Gastrocnemius medialis (tissue), 4 donors: ENCODE measurements at regions of chr1 and their contacts with region 1.

Region 1: DNA sequence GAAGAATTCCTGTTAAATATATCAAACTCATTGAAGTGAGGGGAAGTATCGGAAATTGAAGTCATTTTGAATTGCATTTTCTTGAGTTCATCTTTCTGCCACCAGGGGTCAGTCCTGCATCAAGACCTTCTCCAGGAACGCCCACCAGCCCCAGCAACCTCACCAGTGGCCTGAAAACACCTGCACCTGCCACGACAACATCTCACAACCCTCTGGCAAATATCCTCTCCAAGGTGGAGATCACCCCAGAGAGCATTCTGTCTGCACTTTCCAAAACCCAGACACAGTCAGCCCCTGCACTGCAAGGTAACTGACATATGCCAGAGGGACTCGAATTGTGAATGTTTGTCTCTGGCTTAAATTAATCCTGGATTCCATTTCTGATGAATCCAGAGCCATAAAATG is 22.8 kb upstream of the TARS2 start:
- DNase-seq: peak; percentile 25 to 54
- ATAC-seq: peak; percentile 48 to 73
- H3K4me3 ChIP-seq: no peak overlapping the region
- H3K27ac ChIP-seq: peak overlapping the region in 1 of 4 donors; percentile 37
- H3K4me1 ChIP-seq: peaks cover 0 to 9% of the 10 kb centered on the region in 2 donors
- H3K27me3 ChIP-seq: no peaks in the 10 kb centered on the region
- CTCF ChIP-seq: peak; percentile 79 to 85 (median 81)
- POLR2A ChIP-seq: no peak

Region 2: GRCh38 chr1:150346316-150346715 is 118.1 kb before region 1 on chr1:
- in situ Hi-C with region 1: no loop called
- intact Hi-C with region 1: no loop called
- DNase-seq: no peak
- ATAC-seq: no peak
- H3K4me3 ChIP-seq: no peak overlapping the region
- H3K27ac ChIP-seq: no peak overlapping the region
- H3K4me1 ChIP-seq: no peaks in the 10 kb centered on the region
- H3K27me3 ChIP-seq: no peaks in the 10 kb centered on the region
- CTCF ChIP-seq: no peak
- POLR2A ChIP-seq: no peak

Region 3: GRCh38 chr1:150429805-150430204 is 34.6 kb before region 1 on chr1:
- in situ Hi-C with region 1: no loop called
- intact Hi-C with region 1: no loop called
- DNase-seq: no peak
- ATAC-seq: no peak
- H3K4me3 ChIP-seq: no peak overlapping the region
- H3K27ac ChIP-seq: no peak overlapping the region
- H3K4me1 ChIP-seq: no peaks in the 10 kb centered on the region
- H3K27me3 ChIP-seq: no peaks in the 10 kb centered on the region
- CTCF ChIP-seq: no peak
- POLR2A ChIP-seq: no peak

Region 4: DNA sequence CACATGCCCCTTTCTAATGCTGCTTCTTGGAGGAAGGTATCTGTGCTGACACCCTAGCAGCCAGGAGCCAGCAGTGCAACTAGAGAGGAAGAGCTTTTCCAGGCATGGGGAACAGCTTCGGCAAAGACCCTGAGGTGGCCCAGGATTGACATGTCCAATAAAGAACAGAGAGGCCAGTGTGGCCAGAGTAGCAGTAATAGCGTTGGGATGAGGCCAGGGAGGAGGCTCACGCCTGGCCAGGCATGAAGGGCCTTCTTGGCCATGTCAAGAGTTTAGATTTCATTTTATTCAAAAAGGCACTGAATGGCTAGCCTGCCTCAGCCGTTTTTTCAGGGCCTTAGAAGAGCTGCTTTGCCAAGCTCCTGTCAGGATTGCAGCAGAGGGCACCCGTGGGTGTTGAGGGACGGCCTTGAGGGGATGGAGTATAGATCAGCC is 68.5 kb after region 1 on chr1:
- in situ Hi-C with region 1: loop called (anchors 5 to 10 kb)
- intact Hi-C with region 1: loop called (anchors 1 kb)
- DNase-seq: no peak
- ATAC-seq: no peak
- H3K4me3 ChIP-seq: no peak overlapping the region
- H3K27ac ChIP-seq: peak overlapping the region; percentile 62 to 81 (median 75)
- H3K4me1 ChIP-seq: peaks cover 18 to 25% of the 10 kb centered on the region in 2 donors
- H3K27me3 ChIP-seq: no peaks in the 10 kb centered on the region
- CTCF ChIP-seq: peak in 1 of 5 experiments; percentile 10
- POLR2A ChIP-seq: no peak

Region 5: GRCh38 chr1:150537732-150538684 is 73.6 kb after region 1 on chr1:
- in situ Hi-C with region 1: loop called (anchors 5 to 10 kb)
- intact Hi-C with region 1: no loop called
- DNase-seq: no peak
- ATAC-seq: no peak
- H3K4me3 ChIP-seq: no peak overlapping the region
- H3K27ac ChIP-seq: no peak overlapping the region
- H3K4me1 ChIP-seq: peaks cover 9 to 15% of the 10 kb centered on the region in 2 donors
- H3K27me3 ChIP-seq: no peaks in the 10 kb centered on the region
- CTCF ChIP-seq: no peak
- POLR2A ChIP-seq: no peak

Region 6: DNA sequence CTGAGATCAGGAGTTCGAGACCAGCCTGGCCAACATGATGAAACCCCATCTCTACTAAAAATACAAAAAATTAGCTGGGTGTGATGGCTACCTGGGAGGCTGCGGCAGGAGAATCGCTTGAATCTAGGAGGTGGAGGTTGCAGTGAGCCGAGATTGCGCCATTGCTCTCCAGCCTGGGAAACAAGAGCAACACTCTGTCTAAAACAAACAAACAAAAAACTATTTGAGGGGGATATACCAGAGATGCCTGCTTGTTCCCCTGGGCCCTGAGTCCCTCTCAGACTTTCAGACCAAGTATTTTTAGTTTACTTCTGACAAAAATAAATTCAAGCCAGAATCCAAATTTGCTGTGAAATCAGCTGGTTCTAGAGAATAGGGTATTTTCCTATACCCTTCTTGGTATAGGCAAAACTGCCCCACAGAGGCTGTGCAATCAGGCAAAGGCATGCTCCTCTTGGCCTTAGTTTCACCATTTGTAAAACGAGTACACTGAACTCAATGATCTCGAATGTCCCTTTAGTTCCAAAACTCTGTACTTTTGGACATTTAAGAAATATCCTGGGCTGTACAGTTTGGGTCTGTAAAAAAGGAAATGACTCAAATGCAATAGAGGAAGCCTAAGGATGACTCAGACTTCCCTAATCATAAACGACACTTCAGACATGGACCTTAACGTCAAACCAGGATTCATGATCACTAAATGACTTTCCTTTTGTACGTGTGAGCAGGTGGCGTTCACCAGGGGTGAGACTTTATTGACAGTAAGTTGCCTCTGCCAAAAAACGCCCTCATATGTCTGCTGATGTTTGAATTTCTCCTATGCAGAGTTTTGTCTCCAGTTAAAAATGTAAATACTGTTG is 148.9 kb after region 1 on chr1:
- in situ Hi-C with region 1: loop called in 1 of 4 experiments (anchors 10 kb)
- intact Hi-C with region 1: no loop called
- DNase-seq: no peak
- ATAC-seq: peak; percentile 70 to 75
- H3K4me3 ChIP-seq: no peak overlapping the region
- H3K27ac ChIP-seq: peak overlapping the region; percentile 67 to 81 (median 76)
- H3K4me1 ChIP-seq: peaks cover 14 to 28% of the 10 kb centered on the region in 2 donors
- H3K27me3 ChIP-seq: no peaks in the 10 kb centered on the region
- CTCF ChIP-seq: no peak
- POLR2A ChIP-seq: peak in 1 of 2 donors; percentile 37